Naive thymus-derived CD4-positive, alpha-beta T cell (primary cell): ENCODE measurements at regions of chr11 and their contacts with region 1.

Region 1: GRCh38 chr11:46669711-46670139 is 30.7 kb downstream of the ARHGAP1 start:
- DNase-seq: no peak
- ATAC-seq: no peak
- H3K4me3 ChIP-seq: no peak overlapping the region
- H3K4me3 Mint-ChIP-seq: peak overlapping the region; percentile 24 to 82 (median 54)
- H3K27ac ChIP-seq: peak overlapping the region; percentile 34
- H3K27ac Mint-ChIP-seq: peak overlapping the region; percentile 38 to 95 (median 80)
- H3K4me1 ChIP-seq: peaks cover 48 to 59% of the 10 kb centered on the region in 2 donors
- H3K4me1 Mint-ChIP-seq: peaks cover 36 to 69% (median 50%) of the 10 kb centered on the region in 7 donors
- H3K27me3 ChIP-seq: no peaks in the 10 kb centered on the region
- H3K27me3 Mint-ChIP-seq: no peaks in the 10 kb centered on the region

Region 2: GRCh38 chr11:46593550-46594373 is 76.0 kb before region 1 on chr11 and contains the start of gene AMBRA1:
- CTCF ChIA-PET with region 1: no interaction called
- POLR2A ChIA-PET with region 1: interaction called, 5 read pairs
- intact Hi-C with region 1: loop called in 1 of 2 experiments (anchors 1 kb)
- DNase-seq: peak; percentile 59 to 83 (median 80)
- ATAC-seq: peak; percentile 97
- H3K4me3 ChIP-seq: peak within 1 kb of the TSS; percentile 69
- H3K4me3 Mint-ChIP-seq: peak within 1 kb of the TSS; percentile 90 to 100 (median 97)
- H3K27ac ChIP-seq: peak within 1 kb of the TSS; percentile 84
- H3K27ac Mint-ChIP-seq: peak within 1 kb of the TSS; percentile 92 to 98 (median 96)
- H3K4me1 ChIP-seq: peaks cover 19 to 22% of the 10 kb centered on the region in 2 donors
- H3K4me1 Mint-ChIP-seq: peaks cover 23 to 49% (median 41%) of the 10 kb centered on the region in 7 donors
- H3K27me3 ChIP-seq: no peaks in the 10 kb centered on the region
- H3K27me3 Mint-ChIP-seq: no peaks in the 10 kb centered on the region
- total RNA-seq, gene AMBRA1: 38.1 to 48.7 (median 44.6) TPM

Region 3: DNA sequence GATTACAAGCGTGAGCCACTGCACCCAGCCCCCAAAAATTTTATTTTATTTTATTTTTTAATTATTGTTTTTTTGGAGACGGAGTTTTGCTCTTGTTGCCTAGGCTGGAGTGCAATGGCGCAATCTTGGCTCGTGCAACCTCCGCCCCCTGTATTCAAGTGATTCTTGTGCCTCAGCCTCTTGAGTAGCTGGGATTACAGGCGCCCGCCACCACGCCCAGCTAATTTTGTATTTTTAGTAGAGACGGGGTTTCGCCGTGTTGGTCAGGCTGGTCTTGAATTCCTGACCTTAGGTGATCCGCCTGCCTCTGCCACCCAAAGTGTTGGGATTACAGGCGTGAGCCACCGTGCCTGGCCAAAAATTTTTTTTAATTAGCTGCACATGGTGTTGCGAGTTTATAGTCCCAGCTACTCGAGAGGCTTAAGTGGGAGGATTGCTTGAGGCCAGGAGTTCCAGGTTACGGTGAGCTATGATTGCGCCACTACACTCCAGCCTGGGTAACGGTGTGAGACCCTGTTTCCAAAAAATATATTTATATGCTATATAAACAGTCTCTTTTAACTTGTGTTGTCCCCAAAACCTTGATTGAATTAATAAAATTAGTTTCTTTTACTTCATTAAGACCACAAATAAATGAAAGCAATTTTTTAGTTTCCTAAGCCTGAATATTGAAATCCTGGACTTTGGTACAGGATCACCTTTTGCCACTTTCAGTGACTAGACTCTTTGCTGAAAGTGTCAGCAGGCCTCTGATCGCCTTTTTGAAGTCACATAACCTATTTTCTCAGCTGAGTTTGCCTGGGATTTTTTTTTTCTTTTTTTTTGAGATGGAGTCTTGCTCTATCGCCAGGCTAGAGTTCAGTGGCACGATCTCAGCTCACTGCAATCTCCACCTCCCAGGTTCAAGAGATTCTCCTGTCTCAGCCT is 36.2 kb before region 1 on chr11:
- CTCF ChIA-PET with region 1: no interaction called
- POLR2A ChIA-PET with region 1: no interaction called
- intact Hi-C with region 1: no loop called
- DNase-seq: no peak
- ATAC-seq: no peak
- H3K4me3 ChIP-seq: no peak overlapping the region
- H3K4me3 Mint-ChIP-seq: no peak overlapping the region
- H3K27ac ChIP-seq: no peak overlapping the region
- H3K27ac Mint-ChIP-seq: no peak overlapping the region
- H3K4me1 ChIP-seq: no peaks in the 10 kb centered on the region
- H3K4me1 Mint-ChIP-seq: peaks cover 9 to 27% (median 17%) of the 10 kb centered on the region in 7 donors
- H3K27me3 ChIP-seq: no peaks in the 10 kb centered on the region
- H3K27me3 Mint-ChIP-seq: no peaks in the 10 kb centered on the region

Region 4: GRCh38 chr11:46750126-46750525 is 80.4 kb after region 1 on chr11:
- CTCF ChIA-PET with region 1: no interaction called
- POLR2A ChIA-PET with region 1: no interaction called
- intact Hi-C with region 1: loop called in 1 of 2 experiments (anchors 5 kb)
- DNase-seq: no peak
- ATAC-seq: no peak
- H3K4me3 ChIP-seq: no peak overlapping the region
- H3K4me3 Mint-ChIP-seq: no peak overlapping the region
- H3K27ac ChIP-seq: no peak overlapping the region
- H3K27ac Mint-ChIP-seq: no peak overlapping the region
- H3K4me1 ChIP-seq: no peaks in the 10 kb centered on the region
- H3K4me1 Mint-ChIP-seq: no peaks in the 10 kb centered on the region
- H3K27me3 ChIP-seq: no peaks in the 10 kb centered on the region
- H3K27me3 Mint-ChIP-seq: no peaks in the 10 kb centered on the region

Region 5: DNA sequence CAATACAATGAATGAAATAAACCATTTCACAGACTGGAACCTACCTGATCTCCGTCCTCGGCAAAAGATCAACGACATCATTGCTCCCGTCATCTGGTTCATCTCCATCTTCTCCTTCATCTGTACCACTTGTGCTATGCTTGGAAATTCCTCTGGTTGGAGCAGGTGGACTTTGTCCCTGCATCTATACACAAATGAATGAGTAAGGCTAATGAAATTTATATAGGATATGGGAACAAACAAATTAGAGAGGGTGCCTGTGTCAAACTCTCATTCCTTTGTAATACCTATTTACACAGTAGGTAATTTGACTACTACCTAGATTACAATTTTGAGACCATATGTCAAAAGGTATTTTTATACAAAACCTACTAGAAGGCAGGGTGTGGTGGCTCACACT is 108.7 kb after region 1 on chr11:
- CTCF ChIA-PET with region 1: no interaction called
- POLR2A ChIA-PET with region 1: no interaction called
- intact Hi-C with region 1: no loop called
- DNase-seq: no peak
- ATAC-seq: no peak
- H3K4me3 ChIP-seq: no peak overlapping the region
- H3K4me3 Mint-ChIP-seq: no peak overlapping the region
- H3K27ac ChIP-seq: no peak overlapping the region
- H3K27ac Mint-ChIP-seq: peak overlapping the region in 1 of 9 donors; percentile 23
- H3K4me1 ChIP-seq: no peaks in the 10 kb centered on the region
- H3K4me1 Mint-ChIP-seq: peaks cover 0 to 3% (median 0%) of the 10 kb centered on the region in 7 donors
- H3K27me3 ChIP-seq: no peaks in the 10 kb centered on the region
- H3K27me3 Mint-ChIP-seq: no peaks in the 10 kb centered on the region

Region 6: DNA sequence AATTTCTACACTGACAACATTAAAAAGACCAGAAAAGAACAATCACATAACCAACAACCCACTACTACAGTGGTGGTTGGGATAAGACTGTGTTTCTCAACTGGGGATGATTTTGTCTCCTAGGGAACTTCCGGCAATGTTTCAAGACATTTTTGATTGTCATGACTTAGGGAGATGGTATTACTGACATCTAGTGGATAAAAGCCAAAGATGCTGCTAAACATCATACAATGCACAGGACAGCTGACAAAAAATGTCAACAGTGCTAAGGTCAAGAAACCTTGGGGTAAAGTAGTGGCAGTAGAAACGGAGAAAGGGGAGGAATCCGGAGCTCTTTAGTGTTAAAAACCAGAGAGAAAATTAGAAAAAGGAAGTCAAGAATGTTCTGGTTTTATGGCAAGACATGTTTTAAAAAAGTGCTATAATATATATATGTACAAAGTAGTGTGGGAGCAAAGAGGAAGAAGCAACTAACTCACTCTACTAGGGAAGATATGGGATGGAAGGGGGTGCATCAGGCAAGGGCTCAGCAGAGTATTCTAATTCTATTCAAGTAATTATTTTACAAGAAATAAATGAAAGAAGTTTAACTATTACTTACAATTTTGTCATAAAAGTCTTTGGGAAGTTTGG is 139.2 kb after region 1 on chr11:
- CTCF ChIA-PET with region 1: no interaction called
- POLR2A ChIA-PET with region 1: no interaction called
- intact Hi-C with region 1: loop called in 1 of 2 experiments (anchors 2 kb)
- DNase-seq: peak in 3 of 9 donors; percentile 6 to 14 (median 12)
- ATAC-seq: peak; percentile 68
- H3K4me3 ChIP-seq: no peak overlapping the region
- H3K4me3 Mint-ChIP-seq: no peak overlapping the region
- H3K27ac ChIP-seq: no peak overlapping the region
- H3K27ac Mint-ChIP-seq: peak overlapping the region in 2 of 9 donors; percentile 65 to 66
- H3K4me1 ChIP-seq: no peaks in the 10 kb centered on the region
- H3K4me1 Mint-ChIP-seq: peaks cover 0 to 15% (median 5%) of the 10 kb centered on the region in 7 donors
- H3K27me3 ChIP-seq: no peaks in the 10 kb centered on the region
- H3K27me3 Mint-ChIP-seq: no peaks in the 10 kb centered on the region